ENCODE measurements at regions of chr11 and their contacts with region 1.

Region 1: DNA sequence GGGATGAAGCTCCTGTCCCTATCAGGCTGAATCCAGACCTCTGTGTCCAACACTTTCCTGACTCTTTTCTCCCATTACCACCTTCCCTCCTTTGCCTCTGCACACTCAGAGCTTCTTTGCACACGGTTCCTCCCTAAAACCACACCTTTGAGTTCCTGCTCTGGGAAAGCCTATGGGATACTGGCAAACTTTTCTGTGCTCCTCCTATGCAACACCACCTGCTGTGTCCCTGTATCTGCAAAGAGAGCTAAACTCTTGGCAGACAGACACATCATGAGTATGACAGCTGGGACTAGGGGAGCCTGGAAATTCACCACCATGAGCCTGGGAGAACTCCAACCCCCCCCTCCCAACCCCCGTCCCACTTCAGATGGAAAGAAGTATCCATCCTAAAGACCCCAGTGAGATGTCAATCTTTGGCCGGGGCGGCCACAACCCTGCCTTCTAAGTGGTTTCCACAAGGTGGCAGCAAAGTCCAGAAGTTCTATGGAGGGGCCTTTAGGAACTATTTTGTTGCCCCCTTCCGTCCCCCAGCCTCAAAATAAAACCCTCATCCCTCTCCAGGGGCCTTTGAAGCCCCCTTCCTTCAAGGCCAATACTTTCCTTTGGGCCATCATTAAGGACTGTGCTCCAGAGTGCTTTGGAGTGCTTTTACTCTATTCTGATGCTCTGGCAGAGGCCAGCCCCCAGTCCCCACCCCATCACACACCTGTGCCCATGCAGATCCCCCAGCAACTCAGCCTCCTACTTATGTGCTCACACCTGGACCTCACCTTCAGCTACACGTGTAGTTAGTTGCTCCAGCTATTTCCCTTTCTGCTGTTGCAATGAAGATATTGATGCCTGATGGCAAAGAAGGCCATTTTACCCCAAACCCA is 19.4 kb downstream of the HTR3A start:
- H3K4me3 ChIP-seq: no peak overlapping the region
- H3K27ac ChIP-seq: no peak overlapping the region
- H3K4me1 ChIP-seq: no peaks in the 10 kb centered on the region
- CTCF ChIP-seq: peak; percentile 13; the same call in 1 of the 2 replicates

Region 2: GRCh38 chr11:113839842-113840241 is 154.5 kb before region 1 on chr11:
- CTCF ChIA-PET with region 1: no interaction called
- POLR2A ChIA-PET with region 1: no interaction called
- H3K4me3 ChIP-seq: no peak overlapping the region
- H3K27ac ChIP-seq: no peak overlapping the region
- H3K4me1 ChIP-seq: no peaks in the 10 kb centered on the region
- CTCF ChIP-seq: no peak

Region 3: DNA sequence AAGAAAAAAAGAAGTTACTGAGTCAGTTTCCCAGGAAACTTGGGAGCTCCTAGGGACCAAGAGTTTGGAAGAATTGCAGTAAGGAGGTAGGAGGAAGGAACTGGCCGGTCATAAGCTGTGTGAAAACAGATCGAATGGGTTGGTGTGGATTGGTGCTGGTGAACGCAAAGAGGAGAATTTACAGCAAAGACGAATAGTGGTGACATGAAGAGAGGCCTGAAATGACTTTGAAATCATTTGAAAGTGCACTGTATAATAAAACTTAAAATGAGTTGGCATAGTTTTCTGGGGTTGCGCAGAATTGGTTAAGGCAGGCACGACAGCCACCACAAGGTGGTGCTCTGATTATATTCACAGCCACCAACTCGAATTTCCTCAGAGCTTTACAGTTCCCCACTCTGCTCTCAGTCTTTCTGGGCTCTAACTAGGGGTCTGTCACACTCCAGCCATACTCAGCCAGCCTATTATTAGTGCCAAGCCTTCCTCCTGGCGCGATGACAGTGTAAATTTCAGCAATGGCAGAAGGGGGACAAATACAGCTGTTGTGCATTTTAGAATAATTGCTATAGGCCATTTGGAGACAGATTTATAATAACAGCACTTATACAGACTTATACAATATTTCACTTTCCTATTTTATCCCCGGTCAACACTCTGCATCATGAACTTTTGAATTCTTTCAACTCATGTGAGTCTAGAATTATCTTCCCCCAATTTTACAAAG is 98.0 kb before region 1 on chr11:
- CTCF ChIA-PET with region 1: interaction called, 62 read pairs
- POLR2A ChIA-PET with region 1: no interaction called
- H3K4me3 ChIP-seq: no peak overlapping the region
- H3K27ac ChIP-seq: peak overlapping the region; percentile 2; the same call in 1 of the 2 replicates
- H3K4me1 ChIP-seq: no peaks in the 10 kb centered on the region; the same call in 1 of the 2 replicates
- CTCF ChIP-seq: peak; percentile 59

Region 4: DNA sequence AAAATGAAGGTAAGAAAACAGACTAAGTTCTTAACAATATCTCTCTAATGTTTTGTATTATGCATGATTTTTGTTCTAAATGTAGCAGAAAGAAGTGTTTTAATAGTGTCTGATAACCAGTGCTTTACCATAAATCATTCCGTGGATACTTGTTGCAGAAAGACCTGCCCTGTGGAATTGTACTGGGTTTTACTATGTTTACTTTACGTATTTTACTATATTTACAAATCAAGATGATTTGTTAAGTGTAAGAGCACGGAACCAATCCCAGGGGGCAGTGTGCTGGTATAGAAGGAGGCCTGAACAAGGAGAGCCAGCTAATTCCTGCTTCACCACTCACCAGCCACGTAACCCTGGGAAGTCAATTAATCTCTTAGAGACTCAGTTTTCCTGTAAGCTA is 88.3 kb before region 1 on chr11:
- CTCF ChIA-PET with region 1: interaction called, 28 read pairs
- POLR2A ChIA-PET with region 1: no interaction called
- H3K4me3 ChIP-seq: no peak overlapping the region
- H3K27ac ChIP-seq: peak overlapping the region; percentile 54
- H3K4me1 ChIP-seq: peaks cover 18% of the 10 kb centered on the region
- CTCF ChIP-seq: no peak

Region 5: GRCh38 chr11:114036156-114036811 is 42.0 kb after region 1 on chr11:
- CTCF ChIA-PET with region 1: interaction called, 23 read pairs
- POLR2A ChIA-PET with region 1: no interaction called
- H3K4me3 ChIP-seq: peak overlapping the region; percentile 32
- H3K27ac ChIP-seq: no peak overlapping the region; the same call in 1 of the 2 replicates
- H3K4me1 ChIP-seq: 0 out of 2 replicates have a peak, but pooled peaks cover 5% of the 10 kb centered on the region
- CTCF ChIP-seq: peak; percentile 95

Region 6: DNA sequence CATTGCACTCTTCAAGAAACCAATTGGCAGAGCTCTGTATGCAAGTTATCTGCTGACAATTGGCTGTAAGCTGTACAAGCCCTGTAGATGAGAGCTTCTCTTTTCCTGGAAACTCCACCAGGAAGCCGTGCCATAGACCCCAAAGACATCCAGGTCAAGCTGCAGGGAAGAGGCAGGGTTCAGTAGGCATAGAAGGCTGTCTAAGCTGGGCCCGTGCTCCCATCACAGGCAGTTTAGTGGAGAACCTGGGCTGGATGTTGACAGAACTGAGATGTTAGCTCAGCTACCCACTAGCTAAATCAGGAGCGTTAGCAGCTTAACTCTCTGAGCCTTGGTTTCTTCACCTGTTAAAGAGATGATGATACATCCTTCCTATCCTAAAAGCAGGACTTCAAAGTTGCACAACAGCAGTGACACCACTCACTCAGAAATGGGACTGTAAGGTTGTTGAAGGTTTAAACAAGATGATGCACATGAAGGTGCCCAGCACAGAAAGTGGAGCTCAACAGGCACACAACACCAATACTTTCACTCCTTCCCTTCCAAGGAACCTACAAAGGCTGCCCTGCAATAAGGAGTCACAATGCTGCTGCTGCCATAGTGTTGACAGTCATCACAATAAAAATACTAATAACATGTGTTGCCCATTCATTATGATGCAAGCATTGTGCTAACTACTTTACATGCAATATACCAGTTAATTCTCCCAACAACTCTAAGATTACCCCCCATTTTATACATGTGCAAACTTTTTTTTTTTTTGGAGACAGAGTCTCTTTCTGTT is 180.6 kb after region 1 on chr11:
- CTCF ChIA-PET with region 1: interaction called, 23 read pairs
- POLR2A ChIA-PET with region 1: no interaction called
- H3K4me3 ChIP-seq: no peak overlapping the region
- H3K27ac ChIP-seq: no peak overlapping the region
- H3K4me1 ChIP-seq: no peaks in the 10 kb centered on the region; the same call in 1 of the 2 replicates
- CTCF ChIP-seq: no peak

Region 7: GRCh38 chr11:114180301-114181055 is 186.2 kb after region 1 on chr11:
- CTCF ChIA-PET with region 1: interaction called, 23 read pairs
- POLR2A ChIA-PET with region 1: no interaction called
- H3K4me3 ChIP-seq: no peak overlapping the region
- H3K27ac ChIP-seq: no peak overlapping the region
- H3K4me1 ChIP-seq: no peaks in the 10 kb centered on the region; the same call in 1 of the 2 replicates
- CTCF ChIP-seq: peak; percentile 72